K562 (cell line): ENCODE measurements at regions of chr12 and their contacts with region 1.

Region 1: DNA sequence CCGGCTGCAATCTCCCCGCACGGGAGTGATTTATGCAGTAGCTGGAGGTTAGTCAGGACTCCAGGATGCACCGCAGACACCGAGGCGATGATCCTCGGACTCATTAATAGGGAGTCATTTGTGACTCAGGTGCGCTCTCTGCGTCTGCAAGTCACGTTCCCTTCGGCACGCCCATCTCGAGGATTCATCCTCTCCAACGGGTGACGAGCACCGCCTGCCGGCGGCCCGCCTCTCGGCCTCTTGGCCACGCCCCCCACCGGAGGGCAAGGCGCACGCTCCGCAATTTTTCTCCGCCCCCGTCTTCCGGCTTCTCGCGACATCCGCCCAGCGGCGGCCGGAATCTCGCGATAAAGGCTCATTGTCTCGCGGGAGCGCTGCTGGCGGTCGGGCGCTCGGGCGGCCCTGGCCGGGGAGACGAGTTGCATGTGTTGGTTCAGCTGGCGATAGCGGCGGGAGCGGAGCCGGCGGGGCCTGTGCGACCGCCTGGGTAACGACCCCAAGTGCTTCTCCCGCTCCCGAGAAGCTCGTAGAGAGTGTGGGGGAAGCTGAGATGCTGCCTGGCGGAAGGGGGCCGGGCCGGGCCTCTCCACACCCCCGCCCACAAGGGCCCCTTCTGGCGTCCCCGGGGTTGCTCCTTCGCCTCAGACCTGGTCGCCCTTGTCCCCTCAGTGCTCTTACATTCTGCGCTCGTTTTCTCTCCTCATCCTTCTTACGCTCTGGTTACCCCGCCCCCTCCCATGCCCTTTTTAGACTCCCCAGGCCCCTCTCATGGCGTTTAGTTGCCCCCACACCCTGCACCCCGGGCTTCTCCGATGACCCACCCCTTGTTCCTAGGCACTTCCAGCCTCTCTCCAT is at the start of gene DENR:
- DNase-seq: peak; percentile 95 to 98 (median 96)
- ATAC-seq: peak; percentile 94
- H3K4me3 ChIP-seq: peak within 1 kb of the TSS; percentile 77
- H3K27ac ChIP-seq: peak within 1 kb of the TSS; percentile 87
- H3K4me1 ChIP-seq: peaks cover 31 to 33% of the 10 kb centered on the region in 2 experiments; a peak in 4 of 5 replicates
- H3K27me3 ChIP-seq: no peaks in the 10 kb centered on the region
- CTCF ChIP-seq: peak; percentile 96 to 98 (median 98)
- EP300 ChIP-seq: no peak
- POLR2A ChIP-seq: peak; percentile 97
- RAD21 ChIP-seq: peak; percentile 97 to 100
- polyA plus RNA-seq, gene DENR: 32.5 to 40.1 TPM

Region 2: GRCh38 chr12:122215771-122216170 is 536.9 kb before region 1 on chr12:
- CTCF ChIA-PET with region 1: no interaction called
- POLR2A ChIA-PET with region 1: no interaction called
- in situ Hi-C with region 1: no loop called
- intact Hi-C with region 1: no loop called
- DNase-seq: no peak
- ATAC-seq: no peak
- H3K4me3 ChIP-seq: no peak overlapping the region
- H3K27ac ChIP-seq: no peak overlapping the region
- H3K4me1 ChIP-seq: no peaks in the 10 kb centered on the region
- H3K27me3 ChIP-seq: no peaks in the 10 kb centered on the region
- CTCF ChIP-seq: no peak
- EP300 ChIP-seq: no peak
- POLR2A ChIP-seq: no peak
- RAD21 ChIP-seq: no peak

Region 3: DNA sequence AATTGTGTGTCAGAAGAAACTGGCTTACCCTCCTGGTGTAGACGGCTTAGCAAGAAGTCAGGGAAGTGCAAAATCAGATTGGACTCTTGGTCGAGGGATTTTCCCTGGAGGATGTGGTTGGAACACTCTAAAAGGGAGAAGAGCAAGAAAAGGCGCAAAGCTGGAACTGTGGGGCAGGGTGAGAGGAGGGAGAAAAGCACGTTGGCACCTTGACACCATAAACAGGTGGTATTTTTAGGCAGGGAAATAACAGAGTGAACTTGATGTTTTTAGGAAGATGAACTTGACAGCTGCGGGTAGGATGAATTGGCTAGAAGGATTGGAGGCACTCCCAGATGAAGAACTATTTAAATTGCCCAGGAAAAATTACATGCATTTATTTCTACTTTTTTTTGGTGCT is 117.2 kb before region 1 on chr12:
- CTCF ChIA-PET with region 1: interaction called, 61 read pairs
- POLR2A ChIA-PET with region 1: no interaction called
- in situ Hi-C with region 1: loop called (anchors 5 kb)
- intact Hi-C with region 1: loop called (anchors 1 kb)
- DNase-seq: no peak
- ATAC-seq: no peak
- H3K4me3 ChIP-seq: no peak overlapping the region
- H3K27ac ChIP-seq: no peak overlapping the region
- H3K4me1 ChIP-seq: no peaks in the 10 kb centered on the region
- H3K27me3 ChIP-seq: no peaks in the 10 kb centered on the region
- CTCF ChIP-seq: no peak
- EP300 ChIP-seq: no peak
- POLR2A ChIP-seq: no peak
- RAD21 ChIP-seq: no peak

Region 4: DNA sequence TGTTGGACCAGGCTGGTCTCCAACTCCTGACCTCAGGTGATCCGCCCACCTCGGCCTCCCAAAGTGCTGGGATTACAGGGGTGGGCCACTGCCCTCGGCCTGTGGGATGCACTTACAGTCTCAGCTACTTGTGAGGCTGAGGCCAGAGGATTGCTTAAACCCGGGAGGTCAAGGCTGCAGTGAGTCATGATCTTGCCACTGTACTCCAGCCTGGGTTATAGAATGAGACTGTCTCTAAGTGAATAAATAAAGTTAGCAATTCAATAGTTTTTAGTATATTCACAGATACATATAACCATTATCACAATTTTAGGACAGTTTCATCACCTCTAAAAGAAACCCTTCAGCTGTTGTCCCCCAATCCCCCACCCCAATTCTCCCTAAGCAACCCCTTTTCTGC is 110.7 kb before region 1 on chr12:
- CTCF ChIA-PET with region 1: interaction called, 61 read pairs
- POLR2A ChIA-PET with region 1: interaction called, 3 read pairs
- in situ Hi-C with region 1: loop called (anchors 5 kb)
- intact Hi-C with region 1: loop called (anchors 1 kb)
- DNase-seq: no peak
- ATAC-seq: no peak
- H3K4me3 ChIP-seq: no peak overlapping the region
- H3K27ac ChIP-seq: no peak overlapping the region
- H3K4me1 ChIP-seq: peaks cover 0 to 8% of the 10 kb centered on the region in 2 experiments; a peak in 2 of 5 replicates
- H3K27me3 ChIP-seq: no peaks in the 10 kb centered on the region
- CTCF ChIP-seq: no peak
- EP300 ChIP-seq: no peak
- POLR2A ChIP-seq: no peak
- RAD21 ChIP-seq: no peak